ENCODE measurements at regions of chr7 and their contacts with region 1.

Region 1: DNA sequence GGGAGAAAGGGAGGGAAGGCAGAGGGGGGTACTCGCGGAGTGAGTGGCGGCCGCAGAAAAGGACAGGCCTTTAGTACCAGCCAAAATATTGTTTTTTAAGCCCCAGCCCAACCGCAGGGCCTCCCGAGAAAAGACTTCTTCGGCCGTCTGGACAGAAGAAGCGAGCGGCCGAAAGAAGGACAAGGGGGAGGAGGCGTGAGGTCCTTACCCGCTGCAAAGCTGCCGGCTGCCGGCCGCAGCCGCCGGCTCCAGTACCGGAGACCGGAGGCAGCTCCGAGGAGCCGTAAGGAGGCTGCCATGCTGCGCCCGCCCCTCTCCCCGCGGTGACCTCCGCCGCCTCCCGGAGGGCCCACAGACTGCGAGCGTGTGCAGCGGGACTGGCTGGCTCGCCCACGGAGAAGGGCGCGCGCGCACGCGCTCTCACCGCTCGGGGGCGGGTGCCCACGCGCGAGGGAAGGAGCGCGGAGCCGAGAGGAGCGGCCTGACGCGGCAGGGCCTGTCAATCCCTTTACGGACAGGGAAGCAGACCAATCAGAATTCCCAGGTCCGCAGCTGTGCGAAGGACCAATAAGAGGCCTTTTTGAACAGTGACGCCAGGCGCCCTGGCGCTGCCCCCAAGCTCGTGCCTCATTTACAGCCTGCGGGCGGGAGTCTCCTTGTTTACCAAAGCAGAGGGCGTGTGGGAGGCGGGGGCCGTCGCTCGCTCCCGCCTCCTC is at the start of gene HIBADH:
- DNase-seq: peak; percentile 98 to 99
- H3K4me3 ChIP-seq: peak within 1 kb of the TSS; percentile 85
- H3K4me3 Mint-ChIP-seq: peak within 1 kb of the TSS; percentile 78
- H3K27ac Mint-ChIP-seq: peak within 1 kb of the TSS; percentile 59
- H3K4me1 ChIP-seq: 0 out of 2 replicates have a peak, but pooled peaks cover 3% of the 10 kb centered on the region
- H3K4me1 Mint-ChIP-seq: peaks cover 7% of the 10 kb centered on the region
- H3K27me3 ChIP-seq: no peaks in the 10 kb centered on the region
- H3K27me3 Mint-ChIP-seq: no peaks in the 10 kb centered on the region
- CTCF ChIP-seq: peak; percentile 9 to 50
- total RNA-seq, gene HIBADH: 33.7 and 37.3 TPM in 2 replicates

Region 2: GRCh38 chr7:27605689-27606269 is 56.9 kb before region 1 on chr7:
- CTCF ChIA-PET with region 1: interaction called, 4 read pairs
- POLR2A ChIA-PET with region 1: no interaction called
- intact Hi-C with region 1: loop called (anchors 5 kb)
- DNase-seq: peak in 1 of 2 experiments; percentile 33
- H3K4me3 ChIP-seq: no peak overlapping the region
- H3K4me3 Mint-ChIP-seq: no peak overlapping the region
- H3K27ac Mint-ChIP-seq: peak overlapping the region; percentile 16
- H3K4me1 ChIP-seq: peaks cover 33% of the 10 kb centered on the region
- H3K4me1 Mint-ChIP-seq: no peaks in the 10 kb centered on the region
- H3K27me3 ChIP-seq: no peaks in the 10 kb centered on the region
- H3K27me3 Mint-ChIP-seq: no peaks in the 10 kb centered on the region
- CTCF ChIP-seq: peak; percentile 42 to 52

Region 3: GRCh38 chr7:27677912-27678612 is 15.4 kb after region 1 on chr7:
- CTCF ChIA-PET with region 1: interaction called, 6 read pairs
- POLR2A ChIA-PET with region 1: no interaction called
- intact Hi-C with region 1: loop called (anchors 1 kb)
- DNase-seq: peak in 1 of 2 experiments; percentile 43
- H3K4me3 ChIP-seq: no peak overlapping the region
- H3K4me3 Mint-ChIP-seq: no peak overlapping the region
- H3K27ac Mint-ChIP-seq: peak overlapping the region; percentile 73
- H3K4me1 ChIP-seq: peaks cover 23% of the 10 kb centered on the region
- H3K4me1 Mint-ChIP-seq: peaks cover 12% of the 10 kb centered on the region
- H3K27me3 ChIP-seq: no peaks in the 10 kb centered on the region
- H3K27me3 Mint-ChIP-seq: no peaks in the 10 kb centered on the region
- CTCF ChIP-seq: no peak

Region 4: DNA sequence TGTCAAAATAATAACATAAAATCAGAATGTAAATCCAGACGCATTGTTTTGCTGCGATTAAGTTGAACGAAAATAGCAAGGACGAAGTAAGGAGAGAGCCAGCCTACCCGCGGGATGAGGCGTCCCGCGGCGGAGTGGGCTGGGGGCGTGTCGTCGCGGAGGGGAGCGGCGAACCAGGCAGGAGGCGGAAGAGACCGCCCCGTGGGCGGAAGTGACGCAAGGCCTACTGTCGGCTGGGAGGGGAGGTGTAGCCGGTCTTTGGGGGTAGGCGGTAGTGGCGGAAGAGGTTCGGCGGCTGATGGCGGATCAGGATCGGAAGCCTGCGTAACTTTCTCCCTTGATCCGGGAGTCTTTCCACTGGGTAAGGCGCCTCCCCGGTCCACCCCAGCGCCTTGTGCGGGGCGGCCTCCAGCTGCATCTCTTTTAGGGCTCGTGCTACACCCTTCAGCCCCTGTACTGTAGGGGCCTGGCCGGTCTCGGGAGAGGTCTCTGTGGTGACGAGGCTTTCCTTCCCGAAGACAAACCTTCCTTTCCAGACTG is 77.3 kb after region 1 on chr7 and contains the start of gene TAX1BP1:
- CTCF ChIA-PET with region 1: interaction called, 6 read pairs
- POLR2A ChIA-PET with region 1: interaction called, 4 read pairs
- intact Hi-C with region 1: loop called (anchors 1 kb)
- DNase-seq: peak; percentile 95 to 96
- H3K4me3 ChIP-seq: peak within 1 kb of the TSS; percentile 88
- H3K4me3 Mint-ChIP-seq: peak within 1 kb of the TSS; percentile 86
- H3K27ac Mint-ChIP-seq: peak within 1 kb of the TSS; percentile 87
- H3K4me1 ChIP-seq: peaks cover 40% of the 10 kb centered on the region
- H3K4me1 Mint-ChIP-seq: peaks cover 23% of the 10 kb centered on the region
- H3K27me3 ChIP-seq: no peaks in the 10 kb centered on the region
- H3K27me3 Mint-ChIP-seq: no peaks in the 10 kb centered on the region
- CTCF ChIP-seq: no peak
- total RNA-seq, gene TAX1BP1: 92.4 and 96.8 TPM in 2 replicates

Measured in Caco-2 (cell line).